HepG2 (cell line): ENCODE measurements at regions of chr10 and their contacts with region 1.

Region 1: GRCh38 chr10:30583778-30584415 is 45.7 kb downstream of the LYZL2 start:
- DNase-seq: peak; percentile 84
- ATAC-seq: peak; percentile 84
- H3K4me3 ChIP-seq: peak overlapping the region; percentile 55 to 59 (median 57)
- H3K27ac ChIP-seq: peak overlapping the region; percentile 30
- H3K4me1 ChIP-seq: peaks cover 81% of the 10 kb centered on the region
- H3K27me3 ChIP-seq: no peaks in the 10 kb centered on the region
- CTCF ChIP-seq: peak; percentile 3; the same call in 1 of the 2 replicates
- EP300 ChIP-seq: peak in 1 of 2 experiments; percentile 43; a peak in 1 of 4 replicates
- POLR2A ChIP-seq: no peak
- RAD21 ChIP-seq: no peak

Region 2: GRCh38 chr10:30392564-30392990 is 191.3 kb before region 1 on chr10:
- CTCF ChIA-PET with region 1: interaction called, 3 read pairs
- POLR2A ChIA-PET with region 1: no interaction called
- in situ Hi-C with region 1: loop called (anchors 5 kb)
- intact Hi-C with region 1: no loop called
- DNase-seq: peak; percentile 59
- ATAC-seq: peak; percentile 98
- H3K4me3 ChIP-seq: peak overlapping the region in 1 of 3 experiments; percentile 53; a peak in 2 of 6 replicates
- H3K27ac ChIP-seq: no peak overlapping the region
- H3K4me1 ChIP-seq: peaks cover 45% of the 10 kb centered on the region
- H3K27me3 ChIP-seq: peaks cover 0 to 15% of the 10 kb centered on the region in 2 experiments; a peak in 4 of 5 replicates
- CTCF ChIP-seq: peak; percentile 98
- EP300 ChIP-seq: 0 out of 4 replicates have a peak, but pooled peaks of 1 of the 2 experiments have one; percentile 10
- POLR2A ChIP-seq: no peak
- RAD21 ChIP-seq: peak; percentile 93

Region 3: GRCh38 chr10:30606313-30606712 is 22.4 kb after region 1 on chr10:
- CTCF ChIA-PET with region 1: no interaction called
- POLR2A ChIA-PET with region 1: interaction called, 12 read pairs
- in situ Hi-C with region 1: no loop called
- intact Hi-C with region 1: no loop called
- DNase-seq: peak; percentile 48
- ATAC-seq: peak; percentile 10; the same call in 2 of the 3 replicates
- H3K4me3 ChIP-seq: peak overlapping the region in 1 of 3 experiments; percentile 26; a peak in 1 of 6 replicates
- H3K27ac ChIP-seq: peak overlapping the region; percentile 97
- H3K4me1 ChIP-seq: peaks cover 96% of the 10 kb centered on the region
- H3K27me3 ChIP-seq: no peaks in the 10 kb centered on the region
- CTCF ChIP-seq: no peak
- EP300 ChIP-seq: no peak
- POLR2A ChIP-seq: no peak
- RAD21 ChIP-seq: no peak